K562 (cell line): ENCODE measurements at regions of chr11 and their contacts with region 1.

Region 1: GRCh38 chr11:83819933-83820549 is 533.9 kb upstream of the CCDC90B start:
- DNase-seq: peak; percentile 10 to 43 (median 29)
- ATAC-seq: peak; percentile 83
- H3K4me3 ChIP-seq: no peak overlapping the region
- H3K27ac ChIP-seq: no peak overlapping the region
- H3K4me1 ChIP-seq: no peaks in the 10 kb centered on the region
- H3K27me3 ChIP-seq: no peaks in the 10 kb centered on the region
- CTCF ChIP-seq: peak in 2 of 3 experiments; percentile 28 to 82; a peak in 3 of 6 replicates
- EP300 ChIP-seq: no peak
- POLR2A ChIP-seq: no peak
- RAD21 ChIP-seq: peak; percentile 86 to 88

Region 2: GRCh38 chr11:82682003-82682751 is 1137.9 kb before region 1 on chr11:
- CTCF ChIA-PET with region 1: no interaction called
- POLR2A ChIA-PET with region 1: no interaction called
- in situ Hi-C with region 1: no loop called
- intact Hi-C with region 1: loop called (anchors 1 kb)
- DNase-seq: peak; percentile 35 to 78 (median 44)
- ATAC-seq: peak; percentile 97
- H3K4me3 ChIP-seq: no peak overlapping the region
- H3K27ac ChIP-seq: no peak overlapping the region
- H3K4me1 ChIP-seq: no peaks in the 10 kb centered on the region; a peak in 1 of 5 replicates
- H3K27me3 ChIP-seq: no peaks in the 10 kb centered on the region
- CTCF ChIP-seq: peak; percentile 56 to 71 (median 59); a peak in 5 of 6 replicates
- EP300 ChIP-seq: no peak
- POLR2A ChIP-seq: no peak
- RAD21 ChIP-seq: peak; percentile 69 to 80

Region 3: DNA sequence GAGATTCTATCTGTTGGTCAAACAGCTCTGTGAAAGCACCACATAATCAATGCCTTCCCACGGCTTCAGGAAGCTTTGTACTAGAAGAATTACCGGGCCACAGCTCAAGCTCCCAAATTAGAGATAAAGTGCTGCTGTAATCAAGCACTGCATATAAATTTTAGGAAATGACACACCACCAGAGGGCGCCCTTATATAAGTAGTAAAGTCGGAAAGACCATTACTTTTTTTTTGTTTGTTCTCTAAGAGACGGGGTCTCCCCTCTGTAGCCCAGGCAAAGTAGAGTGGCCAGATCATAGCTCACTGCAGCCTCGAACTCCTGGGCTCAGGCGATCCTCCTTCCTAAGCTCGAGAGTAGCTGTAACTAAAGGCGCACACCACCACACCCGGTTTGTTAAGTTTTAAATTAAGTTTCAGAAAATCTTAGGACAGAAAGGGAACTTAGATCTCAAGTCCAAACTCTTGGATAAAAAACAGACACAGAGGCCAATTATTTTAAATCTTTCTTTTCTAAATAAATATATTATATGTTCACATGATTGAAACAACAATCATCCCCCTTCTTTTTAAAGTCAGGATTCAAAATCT is 952.5 kb before region 1 on chr11:
- CTCF ChIA-PET with region 1: interaction called, 3 read pairs
- POLR2A ChIA-PET with region 1: no interaction called
- in situ Hi-C with region 1: loop called (anchors 25 kb)
- intact Hi-C with region 1: loop called (anchors 2 kb)
- DNase-seq: peak; percentile 51 to 86 (median 54)
- ATAC-seq: peak; percentile 77
- H3K4me3 ChIP-seq: no peak overlapping the region
- H3K27ac ChIP-seq: no peak overlapping the region
- H3K4me1 ChIP-seq: peaks cover 0 to 2% of the 10 kb centered on the region in 2 experiments; a peak in 2 of 5 replicates
- H3K27me3 ChIP-seq: no peaks in the 10 kb centered on the region
- CTCF ChIP-seq: peak; percentile 57 to 85 (median 61)
- EP300 ChIP-seq: no peak
- POLR2A ChIP-seq: no peak
- RAD21 ChIP-seq: peak; percentile 86 to 89

Region 4: DNA sequence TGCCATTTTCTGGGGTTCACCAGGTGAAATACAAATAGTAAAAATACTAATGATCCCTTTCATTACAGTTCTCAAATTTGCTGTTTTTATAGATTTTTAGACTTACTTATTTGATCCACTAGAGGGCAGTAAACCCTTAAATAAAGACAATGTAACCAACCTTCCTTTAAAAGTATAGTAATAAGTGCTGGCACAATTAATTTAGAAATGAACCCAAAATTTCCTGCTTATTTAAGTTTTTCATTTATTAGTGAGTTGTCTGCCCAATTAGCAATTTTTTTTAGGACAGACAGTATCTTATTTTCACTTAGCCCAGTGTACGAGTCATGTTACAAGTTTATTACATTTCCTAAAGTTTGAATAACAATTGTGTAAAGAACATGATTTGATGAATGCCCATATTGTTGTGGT is 913.8 kb before region 1 on chr11:
- CTCF ChIA-PET with region 1: interaction called, 14 read pairs
- POLR2A ChIA-PET with region 1: no interaction called
- in situ Hi-C with region 1: no loop called
- intact Hi-C with region 1: loop called (anchors 10 kb)
- DNase-seq: peak in 1 of 4 experiments; percentile 12
- ATAC-seq: no peak
- H3K4me3 ChIP-seq: no peak overlapping the region
- H3K27ac ChIP-seq: no peak overlapping the region
- H3K4me1 ChIP-seq: peaks cover under 1 to 17% of the 10 kb centered on the region in 2 experiments; a peak in 3 of 5 replicates
- H3K27me3 ChIP-seq: no peaks in the 10 kb centered on the region
- CTCF ChIP-seq: peak in 1 of 3 experiments; percentile 59; a peak in 3 of 6 replicates
- EP300 ChIP-seq: no peak
- POLR2A ChIP-seq: no peak
- RAD21 ChIP-seq: peak; percentile 72 to 82

Region 5: DNA sequence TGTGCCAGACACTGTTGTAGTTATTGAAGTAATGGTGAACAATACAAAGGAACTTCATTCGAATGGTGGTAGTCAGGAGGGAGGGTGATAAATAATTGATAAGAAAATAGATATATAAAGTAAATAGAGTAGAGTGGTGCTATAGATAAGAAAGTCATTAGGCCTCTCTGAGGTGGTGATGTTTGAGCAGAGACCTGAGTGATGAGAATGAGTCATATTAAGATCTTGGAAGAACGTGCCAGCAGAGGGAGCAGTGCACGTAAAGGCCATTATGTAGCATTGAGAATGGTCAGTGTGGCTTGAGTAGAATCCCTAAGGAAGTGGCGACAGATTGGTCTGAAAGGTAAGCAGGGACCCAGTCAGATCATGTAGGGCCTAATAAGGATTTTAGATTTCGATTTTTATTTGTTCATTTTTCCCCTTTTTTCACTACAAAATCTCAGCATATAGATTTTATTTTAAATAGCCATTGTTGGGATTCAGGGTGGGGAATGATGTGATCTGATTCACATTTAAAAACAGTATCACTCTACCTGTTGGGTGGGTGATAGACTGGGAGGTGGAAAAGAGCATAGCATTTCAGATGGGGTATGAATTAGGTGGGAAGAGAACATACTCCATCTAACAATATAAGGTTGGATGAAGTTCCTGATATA is 578.6 kb before region 1 on chr11:
- CTCF ChIA-PET with region 1: no interaction called
- POLR2A ChIA-PET with region 1: no interaction called
- in situ Hi-C with region 1: no loop called
- intact Hi-C with region 1: loop called (anchors 5 kb)
- DNase-seq: peak; percentile 47 to 81 (median 53)
- ATAC-seq: peak; percentile 99
- H3K4me3 ChIP-seq: no peak overlapping the region
- H3K27ac ChIP-seq: no peak overlapping the region
- H3K4me1 ChIP-seq: no peaks in the 10 kb centered on the region
- H3K27me3 ChIP-seq: no peaks in the 10 kb centered on the region
- CTCF ChIP-seq: peak; percentile 66 to 83 (median 70)
- EP300 ChIP-seq: no peak
- POLR2A ChIP-seq: no peak
- RAD21 ChIP-seq: peak; percentile 12 to 60; a peak in 2 of 4 replicates

Region 6: DNA sequence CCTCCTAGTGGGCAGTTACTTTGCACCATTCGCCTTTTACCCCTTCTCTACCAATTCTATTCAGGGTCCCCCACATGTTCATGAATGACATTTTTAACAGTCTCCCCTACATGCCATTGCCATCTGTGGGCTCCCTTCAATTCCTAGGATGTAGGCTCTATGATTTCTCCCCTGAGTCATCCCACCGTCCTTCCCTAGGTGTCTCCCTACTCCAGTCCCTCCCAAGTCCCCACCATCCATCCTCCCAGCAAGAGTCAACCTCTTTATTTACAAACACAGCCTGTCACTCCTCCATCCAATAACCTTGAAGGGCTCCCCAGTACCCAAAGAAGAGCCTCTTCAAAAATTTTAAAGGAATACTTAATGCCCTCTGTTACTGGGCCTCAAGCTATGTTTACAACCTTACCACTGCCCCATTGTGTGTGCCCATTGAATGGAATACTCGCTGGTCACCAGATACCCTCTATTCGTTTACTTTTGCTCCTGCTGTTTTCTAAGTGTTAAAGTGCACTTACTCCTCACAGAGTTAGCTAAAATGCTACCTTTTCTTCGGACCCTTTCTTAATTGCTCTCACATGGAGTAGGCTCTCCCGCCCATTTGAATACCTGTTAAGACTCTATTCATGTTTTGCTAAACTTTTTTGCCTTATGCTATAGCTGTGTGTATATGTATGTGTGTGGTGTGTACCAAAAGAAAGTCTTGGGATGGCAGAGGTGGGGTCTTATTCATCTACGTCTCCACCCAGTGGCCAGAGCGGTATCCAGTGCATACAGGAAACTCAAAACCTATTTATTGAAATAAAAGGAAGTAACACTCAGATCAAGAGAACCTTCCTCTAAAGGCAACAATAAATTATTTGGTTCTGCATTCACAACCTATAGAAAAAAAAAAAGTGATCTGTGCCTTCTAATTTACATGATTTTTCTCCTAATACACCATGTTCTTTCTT is 298.1 kb before region 1 on chr11:
- CTCF ChIA-PET with region 1: no interaction called
- POLR2A ChIA-PET with region 1: no interaction called
- in situ Hi-C with region 1: no loop called
- intact Hi-C with region 1: loop called (anchors 5 kb)
- DNase-seq: peak in 2 of 4 experiments; percentile 2 to 7
- ATAC-seq: peak; percentile 53; the same call in 1 of the 3 replicates
- H3K4me3 ChIP-seq: no peak overlapping the region
- H3K27ac ChIP-seq: no peak overlapping the region
- H3K4me1 ChIP-seq: no peaks in the 10 kb centered on the region
- H3K27me3 ChIP-seq: no peaks in the 10 kb centered on the region
- CTCF ChIP-seq: peak in 2 of 3 experiments; percentile 17 to 35; a peak in 3 of 6 replicates
- EP300 ChIP-seq: no peak
- POLR2A ChIP-seq: no peak
- RAD21 ChIP-seq: no peak

Region 7: GRCh38 chr11:83702796-83703195 is 117.2 kb before region 1 on chr11:
- CTCF ChIA-PET with region 1: no interaction called
- POLR2A ChIA-PET with region 1: no interaction called
- in situ Hi-C with region 1: no loop called
- intact Hi-C with region 1: no loop called
- DNase-seq: no peak
- ATAC-seq: no peak
- H3K4me3 ChIP-seq: no peak overlapping the region
- H3K27ac ChIP-seq: no peak overlapping the region
- H3K4me1 ChIP-seq: no peaks in the 10 kb centered on the region
- H3K27me3 ChIP-seq: no peaks in the 10 kb centered on the region
- CTCF ChIP-seq: no peak
- EP300 ChIP-seq: no peak
- POLR2A ChIP-seq: no peak
- RAD21 ChIP-seq: no peak

Region 8: DNA sequence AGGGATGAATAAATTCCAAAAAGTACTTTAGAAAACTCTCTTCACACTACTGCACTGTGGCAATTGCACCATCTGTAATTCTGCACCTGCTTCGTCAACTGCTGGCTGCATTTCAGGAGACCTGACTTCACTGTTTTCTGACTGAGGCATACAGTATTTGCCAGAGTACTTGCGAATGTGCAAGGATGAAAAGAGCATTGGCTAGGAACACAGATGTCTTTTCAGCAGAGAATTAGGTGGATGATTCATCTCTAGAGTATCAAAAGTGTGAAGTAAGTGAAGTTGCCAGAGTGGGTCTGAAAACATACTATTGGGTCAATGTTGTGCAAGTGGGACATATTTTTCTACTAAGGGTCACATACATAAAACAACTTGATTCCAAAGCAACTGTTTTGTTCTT is 106.3 kb before region 1 on chr11:
- CTCF ChIA-PET with region 1: no interaction called
- POLR2A ChIA-PET with region 1: no interaction called
- in situ Hi-C with region 1: no loop called
- intact Hi-C with region 1: no loop called
- DNase-seq: no peak
- ATAC-seq: no peak
- H3K4me3 ChIP-seq: no peak overlapping the region
- H3K27ac ChIP-seq: no peak overlapping the region
- H3K4me1 ChIP-seq: no peaks in the 10 kb centered on the region
- H3K27me3 ChIP-seq: no peaks in the 10 kb centered on the region
- CTCF ChIP-seq: no peak
- EP300 ChIP-seq: no peak
- POLR2A ChIP-seq: no peak
- RAD21 ChIP-seq: no peak

Region 9: DNA sequence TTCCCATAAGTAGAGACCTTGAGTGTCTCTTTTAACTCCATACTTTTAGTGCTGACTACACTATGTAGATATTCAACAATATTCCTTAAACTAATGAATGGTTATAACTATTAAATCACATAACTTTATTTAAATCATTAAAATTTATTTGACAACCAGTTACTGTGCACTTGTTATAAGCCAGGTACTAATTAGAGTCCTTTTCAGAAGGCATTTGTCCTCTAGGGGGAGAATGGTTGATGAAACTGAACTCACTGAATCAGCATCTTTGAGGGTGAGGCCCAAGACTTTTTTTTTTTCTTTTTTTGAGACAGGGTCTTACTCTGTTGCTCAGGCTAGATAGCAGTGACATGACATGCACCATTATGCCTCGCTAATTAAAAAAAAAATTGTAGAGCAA is 18.3 kb before region 1 on chr11:
- CTCF ChIA-PET with region 1: no interaction called
- POLR2A ChIA-PET with region 1: no interaction called
- in situ Hi-C with region 1: no loop called
- intact Hi-C with region 1: no loop called
- DNase-seq: no peak
- ATAC-seq: no peak
- H3K4me3 ChIP-seq: no peak overlapping the region
- H3K27ac ChIP-seq: no peak overlapping the region
- H3K4me1 ChIP-seq: no peaks in the 10 kb centered on the region
- H3K27me3 ChIP-seq: no peaks in the 10 kb centered on the region
- CTCF ChIP-seq: 0 out of 6 replicates have a peak, but pooled peaks of 1 of the 3 experiments have one; percentile 13
- EP300 ChIP-seq: no peak
- POLR2A ChIP-seq: no peak
- RAD21 ChIP-seq: no peak

Region 10: DNA sequence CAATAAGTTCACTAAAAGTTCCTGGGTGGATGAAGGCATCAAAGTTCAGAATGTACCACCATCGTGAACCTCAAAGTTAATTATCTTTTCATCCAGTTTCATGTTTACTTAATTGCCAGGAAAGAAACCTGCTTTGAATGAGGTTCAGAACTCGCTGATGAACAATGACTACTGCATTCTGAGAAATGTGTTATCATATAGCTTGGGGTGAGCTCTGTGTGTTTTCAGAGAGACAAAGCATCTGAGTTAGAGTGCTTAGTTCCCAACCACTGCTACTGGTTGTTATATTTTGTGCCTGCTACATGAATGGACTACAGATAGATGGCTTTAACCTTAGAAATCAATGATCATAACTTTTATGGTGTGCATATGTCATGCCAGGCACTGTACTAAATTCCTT is 676.1 kb after region 1 on chr11:
- CTCF ChIA-PET with region 1: no interaction called
- POLR2A ChIA-PET with region 1: no interaction called
- in situ Hi-C with region 1: no loop called
- intact Hi-C with region 1: no loop called
- DNase-seq: no peak
- ATAC-seq: no peak
- H3K4me3 ChIP-seq: no peak overlapping the region
- H3K27ac ChIP-seq: no peak overlapping the region
- H3K4me1 ChIP-seq: no peaks in the 10 kb centered on the region
- H3K27me3 ChIP-seq: no peaks in the 10 kb centered on the region
- CTCF ChIP-seq: no peak
- EP300 ChIP-seq: no peak
- POLR2A ChIP-seq: no peak
- RAD21 ChIP-seq: no peak